OCI-LY7 (cell line): ENCODE measurements at regions of chr7 and their contacts with region 1.

Region 1: DNA sequence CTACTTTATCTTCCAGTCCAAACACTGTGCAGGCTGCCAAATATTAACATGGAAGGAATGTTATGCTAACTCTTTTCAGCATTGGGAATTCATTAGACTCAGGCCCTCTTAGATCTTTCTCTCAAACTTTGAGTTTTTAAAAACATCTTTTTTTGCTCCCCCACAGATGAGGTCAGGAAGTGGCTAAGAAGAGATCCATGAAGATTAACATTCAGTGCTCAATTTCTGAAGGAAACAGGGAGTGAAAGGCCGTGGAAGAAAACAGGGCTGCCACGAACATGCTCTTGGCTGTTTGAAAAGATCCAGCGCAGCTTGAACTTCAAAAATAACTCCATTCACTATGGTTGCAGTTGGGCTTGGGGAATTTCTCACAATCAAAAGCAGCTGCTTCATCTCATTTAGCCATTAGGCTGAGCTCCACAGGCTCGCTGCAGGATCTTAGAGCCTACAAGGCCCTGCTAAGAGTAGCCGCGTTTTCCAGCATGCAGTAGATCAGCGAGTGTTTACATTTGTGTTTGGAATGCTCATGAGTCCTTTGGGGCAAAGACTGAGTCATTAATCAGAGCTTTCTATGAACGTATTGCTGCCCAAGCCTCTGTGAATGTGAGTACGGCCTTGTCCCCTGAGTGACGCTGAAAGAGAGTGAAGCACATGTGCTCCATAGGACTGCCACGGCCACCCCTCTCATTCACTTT is 41.2 kb upstream of the TNS3 start:
- DNase-seq: no peak
- H3K4me3 ChIP-seq: peak overlapping the region; percentile 46
- H3K27ac ChIP-seq: peak overlapping the region; percentile 55
- H3K4me1 ChIP-seq: peaks cover 79% of the 10 kb centered on the region
- CTCF ChIP-seq: no peak

Region 2: DNA sequence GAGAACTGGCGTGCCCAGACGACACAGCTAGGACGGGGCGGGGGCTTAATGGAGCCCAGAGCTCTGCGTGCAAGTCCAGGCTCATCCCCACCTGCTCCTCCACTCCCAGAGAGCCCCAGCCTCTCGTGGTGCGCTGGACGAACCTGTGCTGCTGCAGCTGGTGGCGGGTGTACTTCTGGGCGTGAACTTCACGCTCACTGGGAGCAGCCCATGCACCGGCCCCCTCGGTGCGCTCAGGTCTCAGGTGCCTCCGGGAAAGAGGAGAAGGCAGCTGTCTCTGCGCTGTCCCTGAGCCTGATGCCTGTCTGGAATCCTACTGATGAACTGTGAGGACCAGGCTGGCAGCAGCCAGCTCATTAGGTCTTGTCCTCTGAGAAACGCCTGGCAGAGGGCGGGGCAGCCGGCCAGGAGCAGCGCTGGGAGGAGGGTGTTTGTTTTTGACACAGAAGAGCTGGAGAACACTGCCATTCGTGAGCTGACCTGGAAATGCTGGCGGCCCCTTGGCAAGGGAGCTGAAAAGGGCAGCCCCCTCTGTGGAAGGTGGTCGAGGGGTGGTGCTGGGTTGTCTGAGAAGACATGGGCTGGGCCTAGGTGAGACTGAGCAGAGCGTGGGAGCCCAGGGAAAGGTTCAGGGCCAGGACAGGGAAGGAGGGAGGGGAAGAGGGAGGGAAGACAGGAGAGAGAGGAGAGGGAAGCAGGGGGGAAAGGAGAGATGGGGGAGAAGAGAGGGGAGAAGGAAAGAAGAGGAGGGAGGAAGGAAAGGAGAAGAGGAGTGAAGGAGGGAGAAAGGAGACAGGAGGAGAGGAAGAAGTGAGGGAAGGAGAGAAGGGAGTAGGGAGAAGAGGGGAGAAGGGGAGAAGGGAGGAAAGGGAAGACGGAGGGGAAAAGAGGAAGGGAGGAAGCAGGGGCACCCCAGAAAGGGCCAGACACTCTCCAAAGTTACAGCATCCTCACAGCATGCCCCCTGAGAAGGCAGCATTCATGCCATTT is 12.3 kb after region 1 on chr7:
- CTCF ChIA-PET with region 1: interaction called, 5 read pairs
- POLR2A ChIA-PET with region 1: interaction called, 10 read pairs
- intact Hi-C with region 1: no loop called
- DNase-seq: no peak
- H3K4me3 ChIP-seq: no peak overlapping the region
- H3K27ac ChIP-seq: no peak overlapping the region
- H3K4me1 ChIP-seq: peaks cover 27% of the 10 kb centered on the region
- CTCF ChIP-seq: no peak

Region 3: GRCh38 chr7:47690902-47691558 is 67.9 kb after region 1 on chr7:
- CTCF ChIA-PET with region 1: no interaction called
- POLR2A ChIA-PET with region 1: no interaction called
- intact Hi-C with region 1: no loop called
- DNase-seq: no peak
- H3K4me3 ChIP-seq: no peak overlapping the region
- H3K27ac ChIP-seq: no peak overlapping the region
- H3K4me1 ChIP-seq: peaks cover 17% of the 10 kb centered on the region
- CTCF ChIP-seq: no peak

Region 4: GRCh38 chr7:47714669-47715607 is 91.8 kb after region 1 on chr7:
- CTCF ChIA-PET with region 1: interaction called, 3 read pairs
- POLR2A ChIA-PET with region 1: interaction called, 5 read pairs
- intact Hi-C with region 1: loop called (anchors 2 kb)
- DNase-seq: peak; percentile 81
- H3K4me3 ChIP-seq: peak overlapping the region; percentile 41
- H3K27ac ChIP-seq: peak overlapping the region; percentile 95
- H3K4me1 ChIP-seq: peaks cover 81% of the 10 kb centered on the region
- CTCF ChIP-seq: no peak